HEK293 (cell line): ENCODE measurements at regions of chr20 and their contacts with region 1.

Region 1: GRCh38 chr20:5191829-5192569 is 65.2 kb downstream of the CDS2 start:
- H3K4me3 ChIP-seq: no peak overlapping the region
- H3K27ac ChIP-seq: no peak overlapping the region
- H3K4me1 ChIP-seq: no peaks in the 10 kb centered on the region
- CTCF ChIP-seq: peak; percentile 73

Region 2: DNA sequence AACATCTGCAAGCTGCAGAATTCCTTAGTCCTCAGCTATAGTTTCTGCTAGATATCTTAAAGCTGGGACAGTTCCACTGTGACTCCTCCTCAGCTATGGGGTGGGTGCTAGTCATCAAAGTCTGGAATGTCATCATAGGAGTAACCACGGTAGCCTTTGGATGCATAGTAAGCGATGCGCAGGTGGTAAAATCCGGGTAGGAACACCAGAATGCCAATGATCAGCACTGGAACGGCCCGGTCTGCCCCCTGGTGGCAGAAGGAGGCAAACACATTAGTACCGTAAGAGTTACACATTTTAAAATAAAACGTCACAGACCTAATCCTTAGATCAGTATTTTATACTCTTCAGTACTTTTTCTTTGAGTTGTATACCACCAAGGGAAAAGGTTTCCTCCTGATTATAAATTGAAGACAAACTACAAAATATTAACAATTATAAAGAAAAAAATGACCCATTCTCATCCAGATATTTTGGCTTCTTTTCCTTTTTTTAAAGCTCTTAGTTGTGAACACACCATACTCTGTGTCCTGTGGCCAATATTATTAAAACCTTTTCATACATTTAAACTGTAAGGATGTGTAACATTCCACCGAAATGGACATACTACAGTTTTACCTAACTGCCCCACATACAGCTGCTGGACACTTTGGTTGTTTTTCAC is 91.2 kb before region 1 on chr20:
- CTCF ChIA-PET with region 1: interaction called, 16 read pairs
- POLR2A ChIA-PET with region 1: no interaction called
- H3K4me3 ChIP-seq: no peak overlapping the region
- H3K27ac ChIP-seq: no peak overlapping the region
- H3K4me1 ChIP-seq: no peaks in the 10 kb centered on the region
- CTCF ChIP-seq: peak; percentile 54

Region 3: DNA sequence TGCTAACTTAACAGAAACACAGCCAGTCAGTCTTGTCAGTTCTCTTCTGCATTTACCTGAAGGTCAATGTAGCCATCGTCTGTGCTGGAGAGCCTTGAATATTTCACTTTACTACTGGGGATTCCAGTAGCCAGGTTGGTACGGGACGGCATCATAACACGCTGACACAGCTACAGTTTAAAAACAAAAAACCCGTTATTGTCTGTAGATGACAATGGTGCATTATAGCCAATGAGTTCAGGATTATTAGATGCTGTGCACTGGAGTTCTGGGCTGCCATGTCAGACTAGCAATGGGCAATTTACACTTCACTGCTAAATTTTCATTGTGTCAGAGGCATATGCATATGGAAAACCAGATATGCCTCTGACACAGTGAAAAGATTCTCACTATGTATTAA is 82.7 kb before region 1 on chr20:
- CTCF ChIA-PET with region 1: interaction called, 5 read pairs
- POLR2A ChIA-PET with region 1: interaction called, 10 read pairs
- H3K4me3 ChIP-seq: no peak overlapping the region
- H3K27ac ChIP-seq: no peak overlapping the region
- H3K4me1 ChIP-seq: no peaks in the 10 kb centered on the region
- CTCF ChIP-seq: no peak

Region 4: DNA sequence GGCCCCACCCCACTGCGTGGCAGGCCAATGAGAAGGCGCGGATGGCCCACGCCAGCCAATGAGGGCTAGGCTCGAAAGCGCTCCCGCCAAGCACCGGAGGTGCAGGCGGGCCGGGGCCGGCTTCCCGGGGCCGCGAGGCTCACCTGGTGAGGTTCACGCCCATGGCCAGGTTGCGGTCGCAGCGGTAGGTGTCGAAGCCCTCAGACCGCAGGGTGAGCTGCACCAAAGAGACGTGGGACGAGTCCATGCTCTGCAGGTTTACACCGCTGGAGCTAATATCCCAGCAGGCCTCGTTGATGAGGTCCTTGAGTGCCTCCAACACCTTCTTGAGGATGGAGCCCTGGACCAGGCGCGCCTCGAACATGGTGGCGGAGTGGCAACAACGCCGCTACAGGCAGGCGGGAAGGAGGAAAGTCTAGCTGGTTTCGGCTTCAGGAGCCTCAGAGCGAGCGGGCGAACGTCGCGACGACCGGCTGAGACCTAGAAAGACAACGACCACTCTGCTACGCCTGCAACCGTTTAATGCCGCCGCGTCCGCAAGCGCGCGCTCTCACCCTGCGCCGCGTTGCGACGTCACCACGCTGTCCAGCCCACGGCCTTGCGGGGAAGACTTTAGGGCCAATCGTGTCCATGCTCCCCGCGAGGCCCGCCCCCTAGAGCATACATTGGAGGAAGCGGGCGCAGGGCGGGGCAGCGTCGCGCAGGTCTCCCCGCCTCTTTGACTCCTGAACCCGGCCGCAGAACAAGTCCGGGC is 72.4 kb before region 1 on chr20 and contains the start of gene PCNA:
- CTCF ChIA-PET with region 1: interaction called, 160 read pairs
- POLR2A ChIA-PET with region 1: interaction called, 6 read pairs
- H3K4me3 ChIP-seq: peak within 1 kb of the TSS; percentile 85
- H3K27ac ChIP-seq: peak within 1 kb of the TSS; percentile 97
- H3K4me1 ChIP-seq: peaks cover 9% of the 10 kb centered on the region; the same call in 1 of the 2 replicates
- CTCF ChIP-seq: peak; percentile 73

Region 5: GRCh38 chr20:5181956-5182355 is 10.0 kb before region 1 on chr20:
- CTCF ChIA-PET with region 1: interaction called, 30 read pairs
- POLR2A ChIA-PET with region 1: no interaction called
- H3K4me3 ChIP-seq: no peak overlapping the region
- H3K27ac ChIP-seq: no peak overlapping the region
- H3K4me1 ChIP-seq: no peaks in the 10 kb centered on the region
- CTCF ChIP-seq: no peak

Region 6: GRCh38 chr20:5205348-5206210 is 13.6 kb after region 1 on chr20:
- CTCF ChIA-PET with region 1: interaction called, 26 read pairs
- POLR2A ChIA-PET with region 1: no interaction called
- H3K4me3 ChIP-seq: no peak overlapping the region
- H3K27ac ChIP-seq: no peak overlapping the region
- H3K4me1 ChIP-seq: no peaks in the 10 kb centered on the region
- CTCF ChIP-seq: peak; percentile 80

Region 7: DNA sequence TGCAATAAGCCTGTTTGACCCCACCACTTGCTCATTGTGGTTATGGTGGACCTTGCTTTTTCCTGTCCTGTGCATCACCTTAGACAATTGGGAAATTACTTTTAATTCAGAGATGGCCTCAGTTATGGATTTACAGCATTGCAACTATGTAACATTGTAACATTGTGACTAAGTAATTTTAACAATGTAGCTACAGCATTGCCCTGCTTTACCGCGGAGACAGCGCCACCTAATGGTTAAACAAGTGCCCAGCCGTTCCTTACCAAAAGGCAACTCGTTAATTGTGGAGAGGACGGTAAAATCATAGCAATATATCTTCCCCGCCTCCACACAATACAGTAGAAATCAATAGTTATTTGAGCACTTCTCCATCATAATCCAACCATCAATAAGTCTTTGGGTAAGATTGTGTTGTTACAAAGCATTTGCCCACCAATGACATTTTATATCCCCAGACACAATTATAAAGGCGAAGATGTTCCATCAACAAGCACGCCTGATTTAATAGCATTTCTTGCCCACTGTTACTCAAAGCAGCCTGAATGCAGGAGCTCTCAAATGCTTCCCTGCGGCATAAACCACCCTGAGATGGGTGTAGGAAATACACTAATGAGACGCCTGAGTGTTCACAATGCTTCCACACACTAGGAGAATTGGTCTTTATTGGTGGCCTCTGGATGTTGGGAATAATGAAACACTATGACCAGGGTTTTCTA is 31.1 kb after region 1 on chr20:
- CTCF ChIA-PET with region 1: interaction called, 17 read pairs
- POLR2A ChIA-PET with region 1: no interaction called
- H3K4me3 ChIP-seq: no peak overlapping the region
- H3K27ac ChIP-seq: no peak overlapping the region
- H3K4me1 ChIP-seq: no peaks in the 10 kb centered on the region
- CTCF ChIP-seq: peak; percentile 42; the same call in 1 of the 2 replicates